CD8-positive, alpha-beta T cell (primary cell): ENCODE measurements at regions of chr19 and their contacts with region 1.

Region 1: DNA sequence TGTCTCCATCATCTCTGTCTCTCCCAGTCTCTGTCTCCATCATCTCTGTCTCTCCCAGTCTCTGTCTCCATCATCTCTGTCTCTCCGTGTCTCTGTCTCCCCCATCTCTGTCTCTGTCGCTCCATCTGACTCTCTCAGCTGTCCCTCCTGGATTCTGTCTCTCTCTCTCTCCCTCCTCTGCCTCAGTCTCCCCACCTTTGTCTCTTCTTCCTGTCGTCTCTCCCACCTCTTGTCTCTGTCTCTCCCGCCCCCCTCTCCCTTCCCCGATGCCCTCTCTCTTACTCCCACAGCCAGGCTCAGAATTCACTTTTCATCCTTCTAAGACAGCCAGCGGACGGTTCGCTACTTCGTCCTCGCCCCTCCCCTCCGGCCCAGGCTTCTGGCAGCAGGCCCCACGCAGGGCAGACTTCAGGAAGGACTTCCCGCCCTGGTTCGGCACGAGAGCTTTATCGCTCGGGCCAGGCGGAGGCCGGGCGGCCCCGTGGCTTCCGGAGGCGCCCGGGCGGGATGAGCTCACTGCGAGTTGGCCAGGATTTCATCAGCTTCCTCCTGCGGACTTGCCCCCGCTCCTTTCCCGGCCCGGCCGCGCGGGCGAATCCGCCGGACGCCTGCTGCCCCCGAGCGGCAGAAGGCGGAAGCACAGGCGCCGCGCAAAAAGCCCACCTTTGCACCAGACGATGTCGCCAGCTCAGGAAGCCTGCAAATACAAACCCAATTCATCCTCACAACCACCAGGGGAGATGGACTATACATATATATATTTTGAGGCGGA is 12.4 kb upstream of the CCDC9 start:
- DNase-seq: peak; percentile 81 to 96 (median 88)
- ATAC-seq: peak; percentile 52
- H3K4me3 ChIP-seq: peak overlapping the region; percentile 27 to 40
- H3K4me3 Mint-ChIP-seq: peak overlapping the region; percentile 65
- H3K27ac ChIP-seq: peak overlapping the region; percentile 18 to 62
- H3K27ac Mint-ChIP-seq: peak overlapping the region; percentile 75
- H3K4me1 ChIP-seq: peaks cover 47% of the 10 kb centered on the region
- H3K4me1 Mint-ChIP-seq: peaks cover 36% of the 10 kb centered on the region
- H3K27me3 ChIP-seq: no peaks in the 10 kb centered on the region
- H3K27me3 Mint-ChIP-seq: no peaks in the 10 kb centered on the region
- CTCF ChIP-seq: peak; percentile 98

Region 2: DNA sequence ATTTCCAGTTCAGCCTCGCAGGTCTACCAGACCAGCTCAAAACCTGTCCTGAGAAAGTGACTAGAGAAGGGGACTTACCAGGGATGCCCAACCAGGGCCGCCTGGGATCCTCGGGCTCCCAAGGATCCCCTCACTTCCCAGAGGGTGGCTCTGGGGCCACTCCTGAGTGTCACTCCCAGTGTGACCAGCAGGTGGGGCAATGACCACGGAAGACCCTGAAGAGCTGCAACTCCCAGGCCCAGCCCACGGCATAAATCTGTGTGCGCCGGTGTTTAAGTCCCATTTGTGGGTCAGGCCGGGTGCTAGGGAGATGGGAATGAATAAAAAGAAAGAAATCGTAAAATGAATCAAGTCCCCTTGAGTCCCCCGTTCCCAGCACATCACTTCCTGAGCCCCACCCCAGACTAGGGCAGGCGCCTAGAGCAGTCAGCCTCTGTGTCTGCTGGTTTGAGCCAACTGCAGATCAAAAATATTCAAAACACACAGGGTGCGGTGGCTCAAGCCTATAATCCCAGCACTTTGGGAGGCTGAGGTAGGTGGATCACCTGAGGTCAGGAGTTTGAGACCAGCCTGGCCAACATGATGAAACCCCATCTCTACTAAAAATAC is 629.7 kb before region 1 on chr19:
- CTCF ChIA-PET with region 1: no interaction called
- POLR2A ChIA-PET with region 1: no interaction called
- intact Hi-C with region 1: no loop called
- DNase-seq: peak; percentile 66 to 88 (median 83)
- ATAC-seq: peak; percentile 71
- H3K4me3 ChIP-seq: peak overlapping the region in 1 of 2 experiments; percentile 20
- H3K4me3 Mint-ChIP-seq: no peak overlapping the region
- H3K27ac ChIP-seq: no peak overlapping the region
- H3K27ac Mint-ChIP-seq: peak overlapping the region; percentile 70
- H3K4me1 ChIP-seq: peaks cover 76% of the 10 kb centered on the region
- H3K4me1 Mint-ChIP-seq: peaks cover 64% of the 10 kb centered on the region
- H3K27me3 ChIP-seq: no peaks in the 10 kb centered on the region
- H3K27me3 Mint-ChIP-seq: no peaks in the 10 kb centered on the region
- CTCF ChIP-seq: peak; percentile 91

Region 3: DNA sequence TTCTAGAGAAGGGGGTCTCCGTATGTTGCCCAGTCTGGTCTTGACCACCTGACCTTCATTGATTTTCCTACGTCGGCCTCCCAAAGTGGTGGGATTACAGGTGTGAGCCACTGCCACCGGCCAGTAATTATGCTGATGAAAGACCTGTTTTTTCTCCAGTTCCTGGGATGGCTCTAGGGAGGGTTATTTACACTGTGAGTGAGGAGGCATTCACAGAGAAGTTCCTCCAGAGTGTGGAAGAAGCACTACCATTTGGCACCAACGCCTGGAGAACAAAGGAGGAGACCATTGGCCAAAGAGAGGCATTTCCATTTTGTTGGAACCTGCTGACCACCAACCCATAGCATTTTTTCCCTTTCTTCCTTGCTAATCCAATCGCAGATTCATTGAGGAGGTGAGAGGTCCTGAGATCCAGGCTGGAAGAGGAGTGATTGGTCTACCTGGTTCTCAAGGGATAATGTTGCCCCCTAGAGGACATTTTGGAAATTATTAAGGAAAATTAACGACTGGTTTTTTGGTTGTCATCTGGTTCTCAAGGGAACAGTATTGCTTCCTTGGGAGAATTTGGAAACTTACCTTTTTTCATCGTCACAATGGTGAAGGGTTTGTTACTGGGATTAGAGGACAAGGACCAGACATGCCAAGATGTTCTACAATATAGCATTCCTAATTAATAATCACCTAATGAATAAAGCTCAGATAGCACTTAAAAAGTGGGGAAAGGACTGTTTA is 118.9 kb before region 1 on chr19:
- CTCF ChIA-PET with region 1: interaction called, 76 read pairs
- POLR2A ChIA-PET with region 1: no interaction called
- intact Hi-C with region 1: loop called in 1 of 2 experiments (anchors 1 kb)
- DNase-seq: peak in 4 of 9 experiments; percentile 11 to 79 (median 64)
- ATAC-seq: peak; percentile 55
- H3K4me3 ChIP-seq: no peak overlapping the region
- H3K4me3 Mint-ChIP-seq: no peak overlapping the region
- H3K27ac ChIP-seq: no peak overlapping the region
- H3K27ac Mint-ChIP-seq: no peak overlapping the region
- H3K4me1 ChIP-seq: peaks cover 2% of the 10 kb centered on the region
- H3K4me1 Mint-ChIP-seq: peaks cover 5% of the 10 kb centered on the region
- H3K27me3 ChIP-seq: no peaks in the 10 kb centered on the region
- H3K27me3 Mint-ChIP-seq: no peaks in the 10 kb centered on the region
- CTCF ChIP-seq: peak; percentile 75

Region 4: DNA sequence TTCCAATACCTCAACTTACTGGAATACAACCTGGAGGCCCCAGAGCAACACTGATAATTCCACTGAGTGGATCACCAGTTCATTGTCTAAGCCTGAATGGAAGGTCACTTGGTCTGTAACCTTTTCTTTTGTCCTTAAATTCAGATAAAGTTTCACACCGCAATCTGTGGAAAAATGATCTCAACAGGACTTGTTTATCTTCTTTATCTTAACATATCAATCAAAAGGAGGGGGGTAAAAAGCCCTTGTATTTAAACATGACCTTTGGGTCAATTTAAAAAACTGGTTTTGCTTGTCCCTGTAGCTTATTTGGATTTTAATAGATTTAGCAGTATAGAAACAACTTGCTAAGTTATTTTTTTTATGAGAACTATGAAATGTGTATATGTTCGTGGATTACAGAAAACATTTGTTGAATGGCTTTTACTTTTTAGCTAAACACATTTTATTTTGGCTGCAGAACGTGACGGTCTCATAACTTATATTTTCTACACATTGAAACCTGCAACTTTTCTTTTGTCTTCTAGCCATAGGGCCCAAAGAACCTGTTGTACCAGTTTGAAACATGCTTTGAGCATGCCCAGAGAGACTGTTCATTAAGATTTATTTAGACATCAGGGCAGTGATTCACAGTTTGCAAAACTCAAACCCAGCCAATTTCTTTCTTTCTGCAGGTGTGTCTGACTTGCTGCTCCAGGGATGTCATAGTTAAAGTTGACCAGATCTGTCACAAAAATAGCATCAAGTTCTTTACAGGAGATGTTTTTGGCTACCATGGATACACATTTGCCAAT is 91.5 kb before region 1 on chr19:
- CTCF ChIA-PET with region 1: interaction called, 505 read pairs
- POLR2A ChIA-PET with region 1: interaction called, 19 read pairs
- intact Hi-C with region 1: loop called (anchors 1 kb)
- DNase-seq: no peak
- ATAC-seq: no peak
- H3K4me3 ChIP-seq: no peak overlapping the region
- H3K4me3 Mint-ChIP-seq: no peak overlapping the region
- H3K27ac ChIP-seq: no peak overlapping the region
- H3K27ac Mint-ChIP-seq: no peak overlapping the region
- H3K4me1 ChIP-seq: peaks cover 44% of the 10 kb centered on the region
- H3K4me1 Mint-ChIP-seq: peaks cover 59% of the 10 kb centered on the region
- H3K27me3 ChIP-seq: no peaks in the 10 kb centered on the region
- H3K27me3 Mint-ChIP-seq: no peaks in the 10 kb centered on the region
- CTCF ChIP-seq: no peak

Region 5: DNA sequence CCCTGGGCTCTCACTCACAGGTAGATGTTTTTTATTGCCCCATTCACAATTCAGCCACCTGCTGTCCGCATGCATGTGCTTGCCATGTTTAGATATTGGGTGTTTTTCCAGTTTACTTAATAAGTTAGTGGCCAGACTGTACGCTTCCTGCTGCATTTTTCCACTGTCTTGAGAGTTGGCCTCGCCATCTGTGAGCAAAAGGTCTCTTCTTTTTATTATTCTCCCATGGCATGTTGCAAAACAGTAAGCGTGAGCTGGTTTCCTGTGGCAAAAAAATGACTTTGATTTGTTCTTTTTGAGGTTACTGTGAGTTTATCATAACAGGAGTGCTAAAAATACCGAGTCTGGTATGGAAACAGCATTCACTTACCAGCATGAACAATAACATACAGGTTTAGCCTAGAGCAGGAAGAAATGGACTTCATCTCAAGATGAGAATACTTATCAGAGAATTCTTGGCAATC is 67.3 kb before region 1 on chr19:
- CTCF ChIA-PET with region 1: interaction called, 24 read pairs
- POLR2A ChIA-PET with region 1: interaction called, 9 read pairs
- intact Hi-C with region 1: no loop called
- DNase-seq: peak in 8 of 9 experiments; percentile 12 to 77 (median 48)
- ATAC-seq: peak; percentile 85
- H3K4me3 ChIP-seq: peak overlapping the region in 1 of 2 experiments; percentile 2
- H3K4me3 Mint-ChIP-seq: peak overlapping the region; percentile 64
- H3K27ac ChIP-seq: peak overlapping the region; percentile 18 to 50
- H3K27ac Mint-ChIP-seq: peak overlapping the region; percentile 95
- H3K4me1 ChIP-seq: peaks cover 59% of the 10 kb centered on the region
- H3K4me1 Mint-ChIP-seq: peaks cover 69% of the 10 kb centered on the region
- H3K27me3 ChIP-seq: no peaks in the 10 kb centered on the region
- H3K27me3 Mint-ChIP-seq: no peaks in the 10 kb centered on the region
- CTCF ChIP-seq: no peak

Region 6: GRCh38 chr19:47210689-47211316 is 33.2 kb before region 1 on chr19:
- CTCF ChIA-PET with region 1: interaction called, 320 read pairs
- POLR2A ChIA-PET with region 1: interaction called, 21 read pairs
- intact Hi-C with region 1: loop called (anchors 1 kb)
- DNase-seq: peak; percentile 58 to 87 (median 83)
- ATAC-seq: peak; percentile 98
- H3K4me3 ChIP-seq: no peak overlapping the region
- H3K4me3 Mint-ChIP-seq: no peak overlapping the region
- H3K27ac ChIP-seq: peak overlapping the region in 1 of 2 experiments; percentile 39
- H3K27ac Mint-ChIP-seq: peak overlapping the region; percentile 80
- H3K4me1 ChIP-seq: peaks cover 8% of the 10 kb centered on the region
- H3K4me1 Mint-ChIP-seq: peaks cover 8% of the 10 kb centered on the region
- H3K27me3 ChIP-seq: no peaks in the 10 kb centered on the region
- H3K27me3 Mint-ChIP-seq: no peaks in the 10 kb centered on the region
- CTCF ChIP-seq: peak; percentile 89

Region 7: DNA sequence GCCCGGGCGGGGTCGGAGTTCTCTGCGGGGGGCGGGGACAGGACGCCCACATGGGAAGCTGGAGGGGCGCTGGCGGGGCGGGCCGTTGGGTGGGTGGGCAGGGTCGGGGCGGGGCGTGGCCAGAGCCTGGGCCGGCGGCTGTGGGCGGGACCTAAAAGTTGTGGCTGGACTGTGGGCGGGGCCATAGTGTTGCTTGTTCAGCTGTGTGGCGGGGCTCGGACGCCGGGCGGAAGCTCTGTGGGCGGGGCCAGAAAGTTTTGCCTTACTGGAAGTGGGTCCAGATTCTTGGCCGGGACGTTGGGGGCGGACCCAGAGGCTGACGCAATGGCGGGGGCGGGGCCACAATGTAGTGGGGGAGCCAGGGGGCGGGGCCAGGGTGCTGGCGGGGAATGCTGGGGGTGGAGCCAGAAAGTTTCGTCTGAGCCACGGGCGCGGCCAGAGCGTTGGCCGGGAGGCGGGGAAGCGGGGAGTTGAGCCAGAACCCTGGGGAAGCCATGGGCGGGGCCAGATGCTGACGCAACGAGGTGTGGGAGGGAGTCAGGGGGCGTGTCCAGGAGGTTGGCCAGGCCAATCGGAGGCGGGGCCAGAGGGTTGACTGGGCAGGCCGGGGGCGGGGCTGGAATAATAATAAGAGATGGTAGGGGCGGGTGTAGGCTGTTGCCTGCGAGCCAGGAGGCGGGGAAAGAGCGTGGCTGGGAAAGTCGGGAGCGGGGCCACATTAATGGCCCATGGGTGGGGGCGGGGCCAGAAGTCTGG is 12.9 kb after region 1 on chr19:
- CTCF ChIA-PET with region 1: interaction called, 56 read pairs
- POLR2A ChIA-PET with region 1: interaction called, 16 read pairs
- intact Hi-C with region 1: no loop called
- DNase-seq: peak; percentile 96 to 100 (median 98)
- ATAC-seq: peak; percentile 80
- H3K4me3 ChIP-seq: peak overlapping the region; percentile 65 to 70
- H3K4me3 Mint-ChIP-seq: peak overlapping the region; percentile 92
- H3K27ac ChIP-seq: peak overlapping the region; percentile 76 to 98
- H3K27ac Mint-ChIP-seq: peak overlapping the region; percentile 97
- H3K4me1 ChIP-seq: peaks cover 23% of the 10 kb centered on the region
- H3K4me1 Mint-ChIP-seq: peaks cover 35% of the 10 kb centered on the region
- H3K27me3 ChIP-seq: no peaks in the 10 kb centered on the region
- H3K27me3 Mint-ChIP-seq: no peaks in the 10 kb centered on the region
- CTCF ChIP-seq: no peak